ENCODE measurements at regions of chr3 and their contacts with region 1.

Region 1: DNA sequence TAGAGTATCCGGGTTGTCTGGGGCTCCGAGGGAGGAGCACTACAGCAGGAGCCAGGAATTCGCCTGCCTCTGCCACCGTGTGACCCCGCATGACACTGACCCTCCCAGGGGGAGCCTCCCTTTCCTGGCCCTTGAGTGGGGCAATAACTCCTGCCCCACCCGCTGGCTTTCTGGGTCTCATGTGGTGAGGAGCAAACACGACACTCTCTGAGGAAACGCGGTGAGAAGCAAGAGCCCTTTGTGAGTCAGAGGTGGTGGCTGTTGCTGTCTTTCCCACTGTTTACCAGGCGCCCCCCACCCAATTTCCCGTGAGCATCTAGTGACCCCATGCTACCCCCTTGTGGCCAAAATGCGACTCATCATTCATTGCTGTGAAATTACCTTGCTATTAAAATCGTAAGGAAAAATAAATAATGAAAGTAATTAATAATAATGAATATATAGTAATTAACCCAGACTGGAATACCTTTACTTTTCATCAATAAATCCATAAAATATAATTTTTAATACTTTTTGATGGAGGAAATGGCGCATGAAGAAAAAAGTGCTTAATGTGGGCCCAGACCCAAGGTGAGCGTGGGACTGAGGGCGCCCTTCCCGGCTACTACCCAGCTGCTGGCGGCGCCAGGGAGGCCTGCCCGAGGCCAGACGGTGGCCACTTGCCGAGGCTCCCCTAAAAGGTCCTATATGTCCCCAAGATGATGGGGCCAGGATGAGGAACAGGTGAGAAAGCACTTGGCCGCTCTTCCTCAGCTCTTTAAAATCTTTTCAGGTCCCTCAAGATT is 29.3 kb downstream of the CCNL1 start:
- DNase-seq: peak; percentile 91 to 93 (median 92)
- ATAC-seq: peak; percentile 82
- H3K4me3 ChIP-seq: no peak overlapping the region
- H3K4me1 ChIP-seq: peaks cover 50% of the 10 kb centered on the region
- CTCF ChIP-seq: peak; percentile 21

Region 2: GRCh38 chr3:156674046-156674910 is 456.4 kb before region 1 on chr3 and contains the start of gene TIPARP:
- intact Hi-C with region 1: loop called in 1 of 2 experiments (anchors 10 kb)
- DNase-seq: peak; percentile 100
- ATAC-seq: peak; percentile 93
- H3K4me3 ChIP-seq: peak within 1 kb of the TSS; percentile 86
- H3K4me1 ChIP-seq: peaks cover 25% of the 10 kb centered on the region
- CTCF ChIP-seq: peak; percentile 86
- total RNA-seq, gene TIPARP: 26.4 to 28.6 (median 26.7) TPM

Region 3: DNA sequence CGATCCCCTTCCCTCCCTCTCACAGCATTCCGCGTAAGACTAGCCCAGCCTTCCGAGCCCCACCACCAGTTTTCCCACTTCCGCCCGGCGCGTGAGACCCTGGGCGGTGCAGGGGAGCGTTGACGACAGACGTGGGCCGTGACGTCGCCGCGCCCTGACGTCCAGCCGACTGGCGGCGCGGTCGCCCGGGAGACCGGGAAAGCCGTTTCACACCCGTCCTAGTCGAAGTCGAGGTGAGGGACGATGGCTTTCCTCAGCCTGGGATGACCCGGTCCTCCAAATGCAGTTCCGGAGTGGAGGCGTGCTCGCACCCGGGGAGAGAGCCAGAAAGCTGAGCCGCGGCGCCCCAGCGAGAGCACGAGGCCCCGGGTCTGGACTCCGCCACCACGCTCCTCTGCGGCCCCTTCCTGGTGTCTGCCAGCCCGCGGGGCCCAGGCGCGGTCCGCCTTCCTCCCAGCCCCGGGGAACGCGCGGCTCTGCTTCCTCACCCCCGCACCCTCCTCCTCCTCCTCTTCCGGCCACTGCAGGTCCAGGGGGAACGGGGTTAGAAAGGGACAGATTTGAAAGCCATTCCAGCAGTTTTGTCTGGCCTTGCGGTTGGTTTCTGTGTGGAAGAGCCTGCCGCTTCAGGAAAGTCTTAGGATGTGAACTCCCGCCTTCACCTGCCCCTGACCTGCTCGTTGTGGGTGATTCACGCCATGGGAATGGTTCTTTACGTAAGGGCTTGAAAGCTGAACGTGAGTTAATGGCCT is 304.3 kb before region 1 on chr3 and contains the start of gene LEKR1:
- intact Hi-C with region 1: loop called in 1 of 2 experiments (anchors 10 kb)
- DNase-seq: peak; percentile 93
- ATAC-seq: peak; percentile 91
- H3K4me3 ChIP-seq: peak within 1 kb of the TSS; percentile 43
- H3K4me1 ChIP-seq: no peaks in the 10 kb centered on the region
- CTCF ChIP-seq: no peak
- total RNA-seq, gene LEKR1: 1.9 to 3.5 (median 1.9) TPM

Region 4: DNA sequence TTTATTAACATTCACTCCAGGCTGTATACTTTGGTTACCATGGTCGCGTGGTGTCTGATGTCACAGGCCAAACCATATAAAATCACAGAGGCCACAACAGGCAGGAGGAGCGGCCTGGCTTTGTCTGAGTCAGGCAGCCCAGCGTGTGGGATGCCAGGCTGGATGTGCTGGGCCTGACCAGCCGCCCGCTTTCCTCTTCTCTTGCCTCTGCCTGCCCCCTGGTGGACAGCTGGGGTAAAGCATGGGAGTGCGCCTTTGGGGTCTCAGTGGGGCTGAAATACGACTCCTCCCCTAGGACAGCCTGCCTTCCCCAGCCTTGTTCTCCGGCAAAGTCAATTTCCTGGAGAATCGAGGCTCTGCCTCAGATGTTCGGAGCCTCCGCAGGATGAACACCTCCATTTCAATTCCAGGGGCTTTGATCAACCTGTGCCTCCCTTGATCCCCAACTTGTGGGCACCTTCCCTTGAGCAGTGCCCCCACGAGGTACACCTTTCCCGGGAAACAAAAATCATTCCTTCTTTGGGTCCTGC is 48.9 kb before region 1 on chr3:
- intact Hi-C with region 1: loop called (anchors 5 to 10 kb)
- DNase-seq: peak; percentile 90 to 92 (median 91)
- ATAC-seq: peak; percentile 98
- H3K4me3 ChIP-seq: no peak overlapping the region
- H3K4me1 ChIP-seq: peaks cover 4% of the 10 kb centered on the region
- CTCF ChIP-seq: peak; percentile 96

Region 5: DNA sequence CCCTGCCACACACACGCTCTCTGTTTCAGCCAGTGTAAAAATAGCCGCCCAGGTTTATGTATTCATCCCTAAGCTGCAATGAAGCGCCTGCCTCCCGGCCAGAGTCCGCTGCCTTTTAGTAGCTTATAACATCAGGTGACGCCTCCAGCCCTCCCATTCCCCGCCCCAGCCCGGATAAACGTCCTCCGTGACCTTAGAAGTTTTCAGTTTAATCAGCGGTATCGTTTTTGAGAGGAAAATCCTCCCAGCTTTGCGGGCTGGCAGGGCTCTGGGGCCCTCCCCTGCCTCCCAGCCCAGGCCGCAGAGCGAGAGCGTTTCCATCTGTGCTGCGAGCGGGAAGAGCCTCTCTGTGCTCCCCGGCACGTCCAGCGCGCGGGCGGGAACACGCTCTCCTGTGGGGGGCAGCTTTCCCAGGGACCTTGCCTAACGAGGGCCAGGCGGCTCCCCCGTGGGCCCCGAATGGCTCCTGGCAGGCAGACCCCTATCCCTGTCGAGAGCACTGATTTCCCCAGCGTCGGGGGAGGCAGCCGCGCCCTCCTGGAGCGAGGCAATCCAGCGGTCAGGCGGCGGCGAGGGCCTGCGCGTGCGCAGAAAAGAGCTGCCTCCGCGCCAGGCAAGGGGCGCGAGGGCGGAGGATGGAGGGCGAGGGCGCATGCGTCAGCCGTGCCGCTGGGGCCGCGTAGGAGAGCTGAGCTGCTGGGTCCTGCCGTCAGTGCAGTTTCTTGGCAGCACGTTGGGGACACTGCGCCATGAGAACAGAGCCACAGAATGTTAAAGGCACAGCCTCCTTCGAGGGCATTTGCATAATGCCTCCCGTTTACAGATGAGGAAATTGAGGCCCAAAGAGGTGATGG is 41.8 kb before region 1 on chr3:
- intact Hi-C with region 1: loop called (anchors 5 to 10 kb)
- DNase-seq: peak; percentile 96 to 97 (median 96)
- ATAC-seq: peak; percentile 88
- H3K4me3 ChIP-seq: peak overlapping the region; percentile 33
- H3K4me1 ChIP-seq: peaks cover 34% of the 10 kb centered on the region
- CTCF ChIP-seq: peak; percentile 16